CD4-positive, alpha-beta T cell (primary cell): ENCODE measurements at regions of chr2 and their contacts with region 1.

Region 1: GRCh38 chr2:113181258-113182051 is 7.7 kb downstream of the PSD4 start:
- DNase-seq: peak in 4 of 14 experiments; percentile 41 to 50 (median 42)
- ATAC-seq: peak; percentile 51
- H3K4me3 ChIP-seq: peak overlapping the region; percentile 26
- H3K4me3 Mint-ChIP-seq: peak overlapping the region; percentile 71
- H3K27ac ChIP-seq: peak overlapping the region; percentile 32 to 45
- H3K27ac Mint-ChIP-seq: peak overlapping the region; percentile 93
- H3K4me1 ChIP-seq: peaks cover 100% of the 10 kb centered on the region
- H3K4me1 Mint-ChIP-seq: peaks cover 93% of the 10 kb centered on the region
- H3K27me3 ChIP-seq: no peaks in the 10 kb centered on the region
- H3K27me3 Mint-ChIP-seq: no peaks in the 10 kb centered on the region
- CTCF ChIP-seq: no peak

Region 2: DNA sequence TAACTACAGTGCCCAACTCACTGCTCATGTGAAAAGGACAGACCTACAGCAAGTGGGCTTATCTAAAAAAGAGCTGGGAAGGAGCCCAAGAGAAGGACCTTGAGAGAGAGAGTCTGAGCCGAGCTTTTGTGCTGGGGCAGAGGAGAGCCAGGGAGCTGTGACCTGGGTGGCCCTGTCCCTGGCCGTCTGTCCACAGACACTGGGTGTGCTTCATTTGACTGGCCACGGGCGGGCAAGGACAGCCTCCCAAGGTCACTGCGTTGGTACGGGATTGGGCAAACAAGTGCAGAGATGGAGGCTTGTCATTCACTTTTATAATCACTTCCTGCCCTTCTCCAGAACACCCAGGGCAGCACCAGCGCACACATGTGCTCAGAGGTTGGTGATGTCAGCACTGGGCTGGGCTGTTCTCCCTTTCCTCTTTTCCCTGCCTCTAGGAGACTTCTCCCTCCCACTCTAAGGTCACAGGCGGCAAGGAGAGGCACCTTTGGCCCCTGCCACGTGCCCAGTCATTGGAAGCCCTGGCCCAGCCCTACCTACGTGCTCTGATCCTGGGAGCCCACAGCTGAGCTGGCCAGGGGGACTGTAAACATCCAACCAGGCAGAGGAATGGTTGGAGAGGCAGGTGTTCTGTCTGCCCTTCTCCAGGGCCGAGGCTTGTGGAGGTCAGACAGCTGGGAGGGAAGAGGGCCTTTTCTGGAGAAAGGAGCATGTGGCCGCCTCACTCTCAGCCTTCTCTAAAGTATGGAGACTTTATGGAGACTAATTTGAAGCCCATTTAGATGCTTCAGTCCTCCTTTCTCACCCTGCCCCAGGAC is 14.1 kb before region 1 on chr2:
- CTCF ChIA-PET with region 1: interaction called, 7 read pairs
- POLR2A ChIA-PET with region 1: interaction called, 12 read pairs
- intact Hi-C with region 1: no loop called
- DNase-seq: peak in 8 of 14 experiments; percentile 36 to 70 (median 59)
- ATAC-seq: peak; percentile 67
- H3K4me3 ChIP-seq: peak overlapping the region; percentile 17
- H3K4me3 Mint-ChIP-seq: peak overlapping the region; percentile 74
- H3K27ac ChIP-seq: peak overlapping the region; percentile 74 to 85
- H3K27ac Mint-ChIP-seq: peak overlapping the region; percentile 90
- H3K4me1 ChIP-seq: peaks cover 73% of the 10 kb centered on the region
- H3K4me1 Mint-ChIP-seq: peaks cover 73% of the 10 kb centered on the region
- H3K27me3 ChIP-seq: no peaks in the 10 kb centered on the region
- H3K27me3 Mint-ChIP-seq: no peaks in the 10 kb centered on the region
- CTCF ChIP-seq: no peak

Region 3: GRCh38 chr2:113198790-113199612 is 17.5 kb after region 1 on chr2:
- CTCF ChIA-PET with region 1: interaction called, 11 read pairs
- POLR2A ChIA-PET with region 1: interaction called, 31 read pairs
- intact Hi-C with region 1: loop called in 1 of 2 experiments (anchors 2 kb)
- DNase-seq: peak; percentile 53 to 87 (median 75)
- ATAC-seq: peak; percentile 71
- H3K4me3 ChIP-seq: no peak overlapping the region
- H3K4me3 Mint-ChIP-seq: no peak overlapping the region
- H3K27ac ChIP-seq: peak overlapping the region in 1 of 2 donors; percentile 5
- H3K27ac Mint-ChIP-seq: peak overlapping the region; percentile 12
- H3K4me1 ChIP-seq: peaks cover 9% of the 10 kb centered on the region
- H3K4me1 Mint-ChIP-seq: peaks cover 8% of the 10 kb centered on the region
- H3K27me3 ChIP-seq: no peaks in the 10 kb centered on the region
- H3K27me3 Mint-ChIP-seq: no peaks in the 10 kb centered on the region
- CTCF ChIP-seq: peak; percentile 91

Region 4: DNA sequence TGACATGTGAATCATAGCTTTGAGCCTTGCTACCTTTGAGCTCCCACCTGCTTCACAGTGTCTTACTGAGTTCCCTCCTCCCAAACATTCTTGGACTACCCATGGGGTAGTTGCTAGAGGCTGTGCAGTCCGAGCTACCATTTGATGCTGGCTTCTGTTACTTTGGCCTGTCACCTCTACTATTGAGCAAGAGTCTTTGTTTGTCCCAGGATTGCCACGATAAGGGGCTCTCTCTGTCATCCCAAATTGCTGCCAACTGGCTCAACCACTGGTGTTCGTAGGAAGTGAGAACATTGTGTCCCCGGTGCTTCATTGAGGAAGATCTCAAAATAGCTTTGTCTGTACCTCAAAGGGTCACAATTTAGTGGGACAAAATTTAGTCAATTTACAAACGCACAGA is 156.4 kb after region 1 on chr2:
- CTCF ChIA-PET with region 1: no interaction called
- POLR2A ChIA-PET with region 1: no interaction called
- intact Hi-C with region 1: no loop called
- DNase-seq: no peak
- ATAC-seq: no peak
- H3K4me3 ChIP-seq: no peak overlapping the region
- H3K4me3 Mint-ChIP-seq: no peak overlapping the region
- H3K27ac ChIP-seq: no peak overlapping the region
- H3K27ac Mint-ChIP-seq: no peak overlapping the region
- H3K4me1 ChIP-seq: peaks cover 2% of the 10 kb centered on the region
- H3K4me1 Mint-ChIP-seq: peaks cover 3% of the 10 kb centered on the region
- H3K27me3 ChIP-seq: peaks cover 2 to 4% of the 10 kb centered on the region in 2 experiments
- H3K27me3 Mint-ChIP-seq: peaks cover 21% of the 10 kb centered on the region
- CTCF ChIP-seq: no peak